ENCODE measurements at regions of chr10 and their contacts with region 1.

Region 1: GRCh38 chr10:92592761-92593618 is at the start of gene KIF11:
- H3K4me3 Mint-ChIP-seq: peak within 1 kb of the TSS; percentile 96
- H3K27ac Mint-ChIP-seq: peak within 1 kb of the TSS; percentile 98
- H3K4me1 Mint-ChIP-seq: peaks cover 35% of the 10 kb centered on the region
- H3K27me3 Mint-ChIP-seq: no peaks in the 10 kb centered on the region

Region 2: DNA sequence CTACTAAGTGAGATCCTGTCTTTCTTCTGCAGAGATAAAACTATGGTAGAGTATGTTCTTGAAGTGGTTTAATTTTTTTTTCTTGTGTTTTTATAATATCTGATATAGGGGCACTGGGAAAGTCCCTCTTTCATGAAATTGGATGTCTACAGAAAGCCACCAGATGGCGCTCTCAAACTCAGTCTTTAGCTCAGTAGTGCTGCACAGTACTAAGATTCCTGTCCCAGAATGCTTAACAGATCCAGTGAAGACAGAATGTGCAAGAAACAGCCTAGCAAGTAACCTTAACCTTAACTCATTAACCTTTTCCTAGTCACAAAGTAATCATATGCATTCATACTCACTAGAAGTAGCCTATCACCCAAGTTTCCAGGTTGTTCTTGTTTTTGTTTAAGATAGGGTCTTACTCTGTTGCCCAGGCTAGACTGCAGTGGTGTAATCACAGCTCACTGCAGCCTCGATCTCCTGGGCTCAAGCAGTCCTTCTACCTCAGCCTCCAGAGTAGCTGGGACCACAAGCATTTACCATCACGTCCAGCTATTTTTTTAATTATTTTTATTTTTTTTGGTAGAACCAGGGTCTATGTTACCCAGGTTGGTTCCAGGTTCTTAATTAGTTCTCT is 75.8 kb before region 1 on chr10:
- intact Hi-C with region 1: loop called (anchors 1 kb)
- H3K4me3 Mint-ChIP-seq: no peak overlapping the region
- H3K27ac Mint-ChIP-seq: no peak overlapping the region
- H3K4me1 Mint-ChIP-seq: peaks cover 10% of the 10 kb centered on the region
- H3K27me3 Mint-ChIP-seq: no peaks in the 10 kb centered on the region

Region 3: GRCh38 chr10:92567952-92568600 is 24.9 kb before region 1 on chr10:
- intact Hi-C with region 1: no loop called
- H3K4me3 Mint-ChIP-seq: no peak overlapping the region
- H3K27ac Mint-ChIP-seq: no peak overlapping the region
- H3K4me1 Mint-ChIP-seq: peaks cover 51% of the 10 kb centered on the region
- H3K27me3 Mint-ChIP-seq: no peaks in the 10 kb centered on the region

Region 4: DNA sequence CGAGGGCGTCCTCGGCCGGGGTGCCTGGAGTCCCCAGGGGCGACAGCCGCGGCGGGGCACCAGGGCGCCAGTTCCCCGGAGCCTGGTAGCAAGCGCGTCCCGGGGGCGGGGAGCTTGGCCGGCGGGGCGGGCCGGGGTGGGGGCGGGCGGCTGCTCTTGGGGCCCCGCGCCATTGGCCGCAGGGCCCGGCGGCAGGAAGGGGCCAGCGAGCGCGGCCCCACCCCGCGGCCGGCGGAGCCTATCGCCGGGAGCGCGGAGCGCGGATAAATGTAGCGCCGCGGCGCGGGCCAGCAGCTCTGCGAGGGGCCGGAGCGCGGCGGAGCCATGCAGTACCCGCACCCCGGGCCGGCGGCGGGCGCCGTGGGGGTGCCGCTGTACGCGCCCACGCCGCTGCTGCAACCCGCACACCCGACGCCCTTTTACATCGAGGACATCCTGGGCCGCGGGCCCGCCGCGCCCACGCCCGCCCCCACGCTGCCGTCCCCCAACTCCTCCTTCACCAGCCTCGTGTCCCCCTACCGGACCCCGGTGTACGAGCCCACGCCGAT is 96.7 kb after region 1 on chr10 and contains the start of gene HHEX:
- intact Hi-C with region 1: loop called (anchors 2 kb)
- H3K4me3 Mint-ChIP-seq: peak within 1 kb of the TSS; percentile 92
- H3K27ac Mint-ChIP-seq: peak within 1 kb of the TSS; percentile 96
- H3K4me1 Mint-ChIP-seq: peaks cover 50% of the 10 kb centered on the region
- H3K27me3 Mint-ChIP-seq: no peaks in the 10 kb centered on the region

Region 5: GRCh38 chr10:92848441-92849233 is 255.6 kb after region 1 on chr10 and contains the start of gene EXOC6:
- intact Hi-C with region 1: loop called (anchors 10 kb)
- H3K4me3 Mint-ChIP-seq: peak within 1 kb of the TSS; percentile 79
- H3K27ac Mint-ChIP-seq: peak within 1 kb of the TSS; percentile 85
- H3K4me1 Mint-ChIP-seq: peaks cover 39% of the 10 kb centered on the region
- H3K27me3 Mint-ChIP-seq: no peaks in the 10 kb centered on the region

Measured in dendritic cell treated with granulocyte-macrophage colony-stimulating factor and Interleukin-4, amounts not matched to agents 40 ng/mL and 50 ng/mL, for 4 days (primary cell).